Activated CD4-positive, alpha-beta memory T cell treated with anti-CD3 and anti-CD28 coated beads for 36 hours (primary cell): ENCODE measurements at regions of chr2 and their contacts with region 1.

Region 1: DNA sequence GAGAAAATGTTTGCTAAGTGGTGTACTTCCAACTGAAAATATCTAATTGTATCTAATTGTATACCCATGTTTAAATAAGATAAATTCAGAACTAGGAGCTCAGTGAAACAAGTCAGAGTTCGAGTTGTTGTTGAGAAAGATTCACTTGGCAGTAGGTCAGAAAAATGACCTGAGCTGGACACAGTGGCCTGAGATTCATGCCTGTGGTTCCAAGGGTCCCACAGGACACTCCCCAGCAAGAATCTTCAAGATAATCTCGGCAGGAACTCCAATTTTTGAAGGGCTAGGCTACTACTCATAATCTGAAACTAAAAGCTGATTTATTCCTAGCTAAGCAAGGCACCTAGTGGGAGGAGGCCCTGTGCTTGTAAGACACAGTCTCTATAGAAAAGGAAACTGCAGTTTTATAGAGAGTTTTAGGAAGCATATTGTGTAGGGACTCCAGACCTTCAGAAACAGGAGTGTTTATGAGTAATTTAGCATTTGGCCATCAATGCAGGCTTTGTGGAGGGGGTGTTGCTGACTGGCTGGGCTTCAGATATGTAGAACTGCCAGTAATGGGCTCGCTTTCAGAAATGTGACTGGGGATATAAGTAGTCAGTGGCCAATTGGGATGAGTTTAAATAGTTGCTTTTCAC is 43.2 kb downstream of the SP140 start:
- DNase-seq: peak; percentile 32
- H3K4me3 Mint-ChIP-seq: no peak overlapping the region
- H3K27ac Mint-ChIP-seq: peak overlapping the region; percentile 59
- H3K4me1 Mint-ChIP-seq: peaks cover 52% of the 10 kb centered on the region
- H3K27me3 Mint-ChIP-seq: no peaks in the 10 kb centered on the region

Region 2: DNA sequence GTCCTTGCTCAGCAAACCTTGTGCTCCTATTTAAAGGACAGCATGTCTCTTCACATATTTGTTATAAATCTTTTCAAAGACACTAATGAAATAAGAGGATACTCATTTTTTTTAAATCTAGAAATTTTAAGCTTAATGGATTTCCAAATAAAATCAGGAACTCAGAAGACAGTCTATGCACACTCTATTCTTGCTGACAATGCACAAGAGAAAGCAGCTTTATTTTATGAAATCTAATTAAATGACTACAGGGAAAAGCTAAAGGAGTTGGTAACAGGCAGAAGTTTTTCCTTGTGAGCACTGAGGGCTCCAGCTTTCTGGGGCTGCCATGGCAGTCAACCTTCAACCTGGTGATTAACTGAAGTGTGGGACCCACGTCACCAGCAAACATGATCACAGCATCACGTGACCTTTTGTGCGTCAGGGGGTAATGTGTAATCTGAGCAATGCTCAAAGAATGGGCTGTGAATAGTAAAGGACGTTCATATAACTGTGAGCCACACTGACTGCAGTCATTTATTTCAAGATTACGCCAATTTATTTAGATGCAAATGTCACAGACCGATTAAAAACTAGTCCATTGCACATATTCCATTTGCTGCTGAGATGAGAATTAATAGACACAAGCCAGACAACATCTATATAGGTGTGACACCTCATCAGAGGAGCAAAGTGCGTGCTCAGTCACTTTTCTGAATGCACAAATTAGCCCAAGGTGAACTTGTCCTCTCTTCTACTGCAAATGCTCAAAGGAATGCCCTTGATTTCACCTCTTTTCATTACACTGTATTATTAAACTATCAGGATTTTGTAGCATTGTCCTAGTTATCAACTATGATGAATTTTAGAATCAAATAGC is 542.8 kb before region 1 on chr2:
- CTCF ChIA-PET with region 1: no interaction called
- POLR2A ChIA-PET with region 1: no interaction called
- intact Hi-C with region 1: no loop called
- DNase-seq: no peak
- H3K4me3 Mint-ChIP-seq: no peak overlapping the region
- H3K27ac Mint-ChIP-seq: no peak overlapping the region
- H3K4me1 Mint-ChIP-seq: no peaks in the 10 kb centered on the region
- H3K27me3 Mint-ChIP-seq: peaks cover 2% of the 10 kb centered on the region

Region 3: DNA sequence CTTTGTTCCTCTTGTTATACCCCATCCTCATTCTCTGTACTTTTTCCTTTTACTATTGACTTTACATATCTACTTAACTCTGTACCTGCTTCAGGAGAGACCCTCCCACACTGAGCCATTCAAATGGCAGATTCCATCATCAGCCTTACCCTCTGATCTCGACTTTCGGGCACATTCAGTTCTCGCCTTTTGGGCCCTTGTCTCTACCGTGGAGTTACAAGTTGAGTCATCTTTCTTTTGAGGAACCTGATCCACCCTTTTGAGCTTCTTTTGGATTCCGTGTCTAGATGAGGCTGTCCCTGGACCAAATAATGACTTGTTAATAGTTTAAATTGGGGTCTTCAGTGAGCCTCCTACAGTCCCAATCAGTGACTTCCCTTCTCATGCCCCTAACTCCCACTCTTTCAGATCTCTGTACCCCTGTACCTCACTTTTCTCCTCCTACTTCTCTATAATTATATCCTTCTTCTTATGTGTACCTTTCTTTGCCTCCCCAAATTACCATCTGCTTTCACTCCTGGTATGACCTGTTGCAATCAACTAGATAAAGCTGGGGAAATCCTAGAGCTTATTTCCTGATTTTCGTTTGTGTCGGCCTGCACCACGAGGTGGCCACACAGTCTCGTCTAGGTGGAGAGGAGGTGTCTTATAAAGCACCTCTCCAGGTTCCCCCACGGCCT is 66.2 kb before region 1 on chr2:
- CTCF ChIA-PET with region 1: interaction called, 4 read pairs
- POLR2A ChIA-PET with region 1: no interaction called
- intact Hi-C with region 1: loop called (anchors 2 kb)
- DNase-seq: peak; percentile 75
- H3K4me3 Mint-ChIP-seq: peak overlapping the region; percentile 10
- H3K27ac Mint-ChIP-seq: peak overlapping the region; percentile 80
- H3K4me1 Mint-ChIP-seq: peaks cover 35% of the 10 kb centered on the region
- H3K27me3 Mint-ChIP-seq: no peaks in the 10 kb centered on the region

Region 4: DNA sequence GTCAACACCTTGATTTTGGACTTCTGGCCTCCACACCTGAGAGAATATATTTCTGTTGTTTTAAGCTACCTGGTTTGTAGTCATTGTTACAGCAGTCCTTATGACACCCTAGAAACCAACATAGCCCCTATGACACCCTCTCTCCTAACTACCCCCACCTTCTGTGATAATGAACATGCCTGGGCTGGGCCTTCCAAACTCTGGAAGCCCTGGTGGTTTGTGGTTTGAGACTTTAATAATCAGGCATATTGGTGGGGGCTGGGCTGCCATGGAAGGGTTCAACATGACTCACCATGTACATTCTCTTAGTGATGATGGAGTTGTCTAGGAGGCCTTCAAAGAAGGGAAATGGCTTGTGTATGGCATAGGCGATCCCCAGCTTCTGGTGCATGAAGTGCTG is 52.2 kb before region 1 on chr2:
- CTCF ChIA-PET with region 1: no interaction called
- POLR2A ChIA-PET with region 1: no interaction called
- intact Hi-C with region 1: no loop called
- DNase-seq: no peak
- H3K4me3 Mint-ChIP-seq: no peak overlapping the region
- H3K27ac Mint-ChIP-seq: no peak overlapping the region
- H3K4me1 Mint-ChIP-seq: peaks cover 45% of the 10 kb centered on the region
- H3K27me3 Mint-ChIP-seq: no peaks in the 10 kb centered on the region

Region 5: GRCh38 chr2:230254152-230254881 is 14.4 kb before region 1 on chr2:
- CTCF ChIA-PET with region 1: interaction called, 3 read pairs
- POLR2A ChIA-PET with region 1: interaction called, 6 read pairs
- intact Hi-C with region 1: loop called (anchors 1 kb)
- DNase-seq: peak; percentile 80
- H3K4me3 Mint-ChIP-seq: no peak overlapping the region
- H3K27ac Mint-ChIP-seq: no peak overlapping the region
- H3K4me1 Mint-ChIP-seq: peaks cover 18% of the 10 kb centered on the region
- H3K27me3 Mint-ChIP-seq: no peaks in the 10 kb centered on the region

Region 6: DNA sequence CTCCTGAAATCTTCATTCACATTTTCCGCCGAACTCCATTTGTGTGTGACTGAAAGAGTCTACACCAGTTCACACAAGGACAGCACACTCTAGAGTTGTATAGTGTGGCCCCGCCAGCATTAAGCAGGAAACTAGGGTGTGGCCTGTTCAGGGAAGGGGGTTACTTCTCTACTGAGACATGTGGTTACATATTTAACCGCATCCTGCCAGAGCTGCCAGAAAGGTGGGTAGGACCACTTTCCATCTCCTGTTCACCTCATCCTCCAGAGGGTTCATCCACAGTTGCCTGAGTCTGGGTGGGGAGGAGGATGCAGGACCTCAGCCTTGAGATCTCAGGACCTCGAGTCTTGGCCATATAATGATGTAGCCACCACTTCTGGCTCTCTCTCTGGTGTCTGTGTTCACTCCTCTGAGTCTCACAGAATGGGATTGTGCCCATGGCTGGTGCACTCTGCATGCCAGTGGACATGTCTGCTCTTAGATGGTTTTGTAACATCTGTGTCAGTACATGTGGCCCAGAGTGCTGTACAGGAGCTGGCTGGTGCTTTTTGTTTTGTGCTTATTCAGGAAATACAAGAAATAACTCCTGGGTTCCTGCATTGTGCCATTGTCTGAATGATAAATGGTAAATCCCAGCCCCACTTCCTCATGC is 50.6 kb after region 1 on chr2:
- CTCF ChIA-PET with region 1: no interaction called
- POLR2A ChIA-PET with region 1: no interaction called
- intact Hi-C with region 1: loop called (anchors 2 kb)
- DNase-seq: peak; percentile 83
- H3K4me3 Mint-ChIP-seq: peak overlapping the region; percentile 6
- H3K27ac Mint-ChIP-seq: peak overlapping the region; percentile 80
- H3K4me1 Mint-ChIP-seq: peaks cover 60% of the 10 kb centered on the region
- H3K27me3 Mint-ChIP-seq: no peaks in the 10 kb centered on the region

Region 7: DNA sequence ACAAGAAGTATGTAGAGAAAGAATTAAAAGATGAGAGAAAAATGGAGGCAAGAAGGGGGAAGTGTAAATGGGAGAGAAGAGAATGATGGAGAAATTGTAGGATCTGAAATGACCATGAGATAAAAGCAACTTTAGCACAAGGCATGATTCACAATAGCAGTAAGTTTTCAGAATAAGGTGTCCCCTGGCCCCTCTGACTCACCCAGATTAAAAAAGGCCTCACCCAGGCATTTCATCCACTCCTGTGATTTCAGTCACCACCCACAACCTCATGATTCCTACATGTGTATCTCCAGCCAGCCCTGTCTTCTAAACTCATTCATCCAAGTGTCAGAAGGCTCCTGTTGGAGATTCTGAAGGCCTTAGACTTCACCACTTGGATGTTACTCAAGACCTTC is 203.9 kb after region 1 on chr2:
- CTCF ChIA-PET with region 1: no interaction called
- POLR2A ChIA-PET with region 1: no interaction called
- intact Hi-C with region 1: loop called (anchors 5 kb)
- DNase-seq: peak; percentile 76
- H3K4me3 Mint-ChIP-seq: no peak overlapping the region
- H3K27ac Mint-ChIP-seq: peak overlapping the region; percentile 73
- H3K4me1 Mint-ChIP-seq: peaks cover 32% of the 10 kb centered on the region
- H3K27me3 Mint-ChIP-seq: no peaks in the 10 kb centered on the region